IMR-90 (cell line): ENCODE measurements at regions of chr3 and their contacts with region 1.

Region 1: DNA sequence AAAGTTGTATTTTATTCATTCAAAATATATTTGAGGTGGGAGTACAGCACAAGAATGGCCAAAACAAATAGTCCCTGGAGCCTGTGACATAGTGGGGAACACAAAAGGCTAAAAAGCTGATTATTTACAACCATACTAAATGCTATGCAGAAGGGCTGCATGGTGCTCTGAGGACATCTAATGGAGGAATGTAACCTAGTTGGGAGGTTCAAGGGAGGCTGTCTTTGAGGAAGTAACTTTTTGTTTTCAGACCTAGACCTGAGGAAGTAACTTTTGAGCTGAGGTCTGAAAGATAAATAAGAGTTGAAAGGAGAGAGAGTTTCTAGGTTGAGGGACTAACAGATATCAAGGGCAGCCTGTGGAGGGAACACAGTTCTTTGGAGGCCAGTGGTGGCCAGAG is 34.8 kb upstream of the RASA2 start:
- DNase-seq: peak; percentile 80
- ATAC-seq: peak; percentile 68
- H3K4me3 ChIP-seq: no peak overlapping the region
- H3K27ac ChIP-seq: peak overlapping the region; percentile 28; the same call in 1 of the 2 replicates
- H3K4me1 ChIP-seq: peaks cover 24% of the 10 kb centered on the region
- H3K27me3 ChIP-seq: no peaks in the 10 kb centered on the region
- CTCF ChIP-seq: peak; percentile 89
- POLR2A ChIP-seq: peak; percentile 59; the same call in 1 of the 2 replicates
- RAD21 ChIP-seq: peak; percentile 95

Region 2: DNA sequence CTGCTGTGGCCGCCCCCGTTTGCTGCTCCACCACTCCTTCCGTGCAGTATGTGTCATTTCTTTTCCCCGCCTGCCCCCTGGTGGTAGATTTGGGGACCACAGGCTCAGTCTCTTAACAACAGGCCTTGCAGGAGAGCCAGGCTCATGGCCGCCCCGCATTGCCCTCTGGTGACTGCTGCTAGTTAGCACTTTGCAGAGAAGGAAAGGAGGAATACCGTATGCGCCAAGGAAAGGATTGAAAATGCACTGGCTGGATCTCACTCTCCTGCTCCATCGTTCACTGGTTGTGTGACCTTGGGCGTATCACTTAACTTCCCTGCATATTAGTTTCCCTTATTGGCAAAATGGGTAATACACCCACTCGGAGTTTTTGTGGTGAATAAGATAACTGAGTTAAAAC is 259.7 kb before region 1 on chr3:
- CTCF ChIA-PET with region 1: no interaction called
- POLR2A ChIA-PET with region 1: no interaction called
- dilution Hi-C with region 1: no loop called
- in situ Hi-C with region 1: no loop called
- intact Hi-C with region 1: loop called (anchors 1 kb)
- DNase-seq: peak; percentile 91
- ATAC-seq: peak; percentile 100
- H3K4me3 ChIP-seq: no peak overlapping the region
- H3K27ac ChIP-seq: no peak overlapping the region
- H3K4me1 ChIP-seq: no peaks in the 10 kb centered on the region
- H3K27me3 ChIP-seq: peaks cover 20% of the 10 kb centered on the region
- CTCF ChIP-seq: peak; percentile 99
- POLR2A ChIP-seq: no peak
- RAD21 ChIP-seq: peak; percentile 93

Region 3: DNA sequence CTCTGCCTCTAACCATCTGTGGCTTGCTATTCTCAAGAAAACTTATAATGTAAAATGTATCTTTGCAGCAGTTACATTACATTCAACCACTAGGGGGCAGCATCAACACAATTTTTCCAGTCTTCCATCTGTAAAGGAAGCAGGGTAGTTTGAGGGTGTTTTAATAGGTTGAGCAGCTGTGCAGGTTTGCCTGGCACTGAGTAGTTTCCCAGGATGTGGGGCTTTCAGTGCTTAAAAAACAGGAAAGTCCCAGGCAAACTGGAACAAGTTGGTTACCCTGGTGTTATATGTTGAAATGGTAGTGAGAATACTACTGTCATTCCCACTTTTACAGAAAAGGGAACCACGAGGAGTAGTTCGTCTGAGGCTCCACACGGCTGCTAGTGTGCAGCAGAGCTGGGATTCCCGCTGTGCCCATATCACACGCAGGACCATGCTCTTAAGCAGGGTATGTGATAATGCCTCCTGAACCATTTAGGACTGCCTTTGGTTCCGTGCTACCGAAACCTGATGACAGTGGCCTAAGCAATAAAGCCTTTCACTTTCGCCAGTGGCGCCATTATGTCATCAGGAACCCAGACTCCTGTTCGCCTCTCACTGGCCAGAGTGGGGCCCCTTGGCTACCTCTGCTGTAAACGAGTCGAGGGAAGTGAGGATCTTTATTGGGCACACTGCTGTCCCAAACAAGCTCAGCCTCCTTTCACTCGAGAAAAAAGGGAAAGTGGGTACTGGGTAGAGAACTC is 148.4 kb before region 1 on chr3:
- CTCF ChIA-PET with region 1: interaction called, 22 read pairs
- POLR2A ChIA-PET with region 1: interaction called, 3 read pairs
- dilution Hi-C with region 1: no loop called
- in situ Hi-C with region 1: no loop called
- intact Hi-C with region 1: loop called (anchors 2 kb)
- DNase-seq: peak; percentile 86
- ATAC-seq: peak; percentile 62
- H3K4me3 ChIP-seq: no peak overlapping the region
- H3K27ac ChIP-seq: no peak overlapping the region
- H3K4me1 ChIP-seq: peaks cover 6% of the 10 kb centered on the region
- H3K27me3 ChIP-seq: no peaks in the 10 kb centered on the region
- CTCF ChIP-seq: peak; percentile 85
- POLR2A ChIP-seq: no peak
- RAD21 ChIP-seq: peak; percentile 73

Region 4: GRCh38 chr3:141355242-141355641 is 96.8 kb before region 1 on chr3:
- CTCF ChIA-PET with region 1: interaction called, 11 read pairs
- POLR2A ChIA-PET with region 1: no interaction called
- dilution Hi-C with region 1: no loop called
- in situ Hi-C with region 1: loop called (anchors 5 kb)
- intact Hi-C with region 1: no loop called
- DNase-seq: no peak
- ATAC-seq: no peak
- H3K4me3 ChIP-seq: no peak overlapping the region
- H3K27ac ChIP-seq: no peak overlapping the region
- H3K4me1 ChIP-seq: peaks cover 9% of the 10 kb centered on the region
- H3K27me3 ChIP-seq: no peaks in the 10 kb centered on the region
- CTCF ChIP-seq: no peak
- POLR2A ChIP-seq: no peak
- RAD21 ChIP-seq: no peak

Region 5: DNA sequence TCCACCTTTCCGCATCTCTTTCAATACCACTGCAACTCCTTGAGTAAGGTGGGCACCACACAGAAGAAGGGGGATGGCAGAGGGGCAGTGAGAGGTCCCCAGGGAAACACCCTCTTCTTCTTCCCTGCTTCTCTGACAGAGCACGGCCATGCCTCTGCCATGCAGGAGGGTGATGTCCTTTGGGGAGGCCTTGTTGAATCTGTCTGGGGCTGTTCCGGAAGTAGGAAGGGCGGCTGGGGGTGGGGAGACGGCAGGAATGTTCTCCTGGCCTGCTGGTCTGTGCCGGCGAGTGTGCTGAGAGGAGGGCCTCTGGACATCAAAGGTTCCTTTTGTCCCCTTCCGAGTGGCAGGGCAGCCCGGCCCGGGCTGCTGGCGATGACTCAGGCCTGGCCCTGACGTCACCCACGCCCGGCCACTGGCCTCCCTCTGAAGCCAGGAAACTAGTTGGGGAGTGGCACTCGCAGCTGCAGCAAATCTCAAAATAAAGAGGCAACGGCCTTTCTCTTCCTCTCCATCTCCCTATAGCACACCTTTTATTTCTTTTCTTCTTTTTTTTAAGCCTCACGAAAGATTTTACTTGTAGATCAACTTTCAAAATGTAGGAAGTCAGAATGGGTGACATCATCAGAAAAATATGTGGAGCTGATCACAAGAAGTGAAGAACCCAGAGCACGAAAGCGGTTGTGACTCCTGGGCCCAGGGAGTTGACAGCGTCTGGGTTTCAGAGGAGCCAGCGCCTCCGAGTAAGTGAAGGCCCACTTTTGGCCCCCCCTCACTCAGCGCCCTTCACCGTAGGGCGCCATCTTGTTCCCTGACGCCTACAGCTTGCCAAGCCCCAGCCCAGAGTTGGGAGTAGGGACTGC is 83.7 kb before region 1 on chr3 and contains the start of gene ZBTB38:
- CTCF ChIA-PET with region 1: interaction called, 5 read pairs
- POLR2A ChIA-PET with region 1: no interaction called
- dilution Hi-C with region 1: no loop called
- in situ Hi-C with region 1: no loop called
- intact Hi-C with region 1: loop called (anchors 1 kb)
- DNase-seq: peak; percentile 97
- ATAC-seq: peak; percentile 71
- H3K4me3 ChIP-seq: peak within 1 kb of the TSS; percentile 45; the same call in 1 of the 2 replicates
- H3K27ac ChIP-seq: peak within 1 kb of the TSS; percentile 99
- H3K4me1 ChIP-seq: peaks cover 21% of the 10 kb centered on the region
- H3K27me3 ChIP-seq: no peaks in the 10 kb centered on the region
- CTCF ChIP-seq: no peak
- POLR2A ChIP-seq: peak; percentile 43
- RAD21 ChIP-seq: no peak; the same call in 1 of the 2 replicates
- total RNA-seq, gene ZBTB38: 230 and 274 TPM in 2 replicates

Region 6: DNA sequence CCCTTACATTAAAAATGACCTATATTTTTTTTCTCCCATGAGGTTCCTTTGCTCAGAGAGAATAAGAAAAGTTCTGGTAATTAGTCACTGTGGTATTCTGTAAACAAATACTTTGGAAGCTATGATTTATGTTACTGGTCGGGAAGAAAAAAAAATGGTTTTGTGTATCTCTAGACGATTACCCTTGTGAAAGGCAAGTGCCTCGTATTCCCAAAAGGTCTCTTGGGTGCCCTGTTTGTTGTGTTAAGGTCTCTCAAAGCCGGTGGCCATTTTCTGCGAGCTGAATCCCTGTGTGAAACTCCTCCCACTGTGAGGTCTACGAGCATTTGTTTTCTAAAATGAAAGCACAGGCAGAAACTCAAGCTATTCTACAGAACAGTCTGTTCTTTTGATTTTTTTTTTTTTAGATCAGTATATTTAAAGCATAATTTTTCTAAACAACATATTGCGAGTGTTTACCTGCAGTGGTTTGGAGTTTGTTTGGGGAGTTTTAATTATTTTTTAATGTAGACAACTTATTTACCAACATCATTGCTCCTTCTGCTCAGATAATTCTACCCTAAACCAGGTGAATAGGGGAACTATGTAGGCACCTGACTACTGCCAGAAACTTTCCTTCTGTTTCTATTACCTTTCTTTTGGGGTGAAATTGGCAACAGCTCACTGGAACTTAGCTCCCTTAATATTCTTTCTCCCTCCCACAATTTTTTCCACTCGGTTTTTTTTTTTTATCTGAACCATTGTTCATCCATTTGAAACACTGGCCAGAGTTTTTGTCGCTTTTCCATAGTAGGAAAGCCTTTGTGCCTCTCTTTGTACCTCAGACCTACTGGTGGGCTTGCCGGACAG is 39.7 kb before region 1 on chr3:
- CTCF ChIA-PET with region 1: interaction called, 8 read pairs
- POLR2A ChIA-PET with region 1: interaction called, 3 read pairs
- dilution Hi-C with region 1: no loop called
- in situ Hi-C with region 1: no loop called
- intact Hi-C with region 1: loop called (anchors 2 kb)
- DNase-seq: peak; percentile 96
- ATAC-seq: peak; percentile 58
- H3K4me3 ChIP-seq: no peak overlapping the region
- H3K27ac ChIP-seq: peak overlapping the region; percentile 87
- H3K4me1 ChIP-seq: peaks cover 45% of the 10 kb centered on the region
- H3K27me3 ChIP-seq: no peaks in the 10 kb centered on the region
- CTCF ChIP-seq: no peak
- POLR2A ChIP-seq: peak; percentile 55; the same call in 1 of the 2 replicates
- RAD21 ChIP-seq: no peak; the same call in 1 of the 2 replicates

Region 7: DNA sequence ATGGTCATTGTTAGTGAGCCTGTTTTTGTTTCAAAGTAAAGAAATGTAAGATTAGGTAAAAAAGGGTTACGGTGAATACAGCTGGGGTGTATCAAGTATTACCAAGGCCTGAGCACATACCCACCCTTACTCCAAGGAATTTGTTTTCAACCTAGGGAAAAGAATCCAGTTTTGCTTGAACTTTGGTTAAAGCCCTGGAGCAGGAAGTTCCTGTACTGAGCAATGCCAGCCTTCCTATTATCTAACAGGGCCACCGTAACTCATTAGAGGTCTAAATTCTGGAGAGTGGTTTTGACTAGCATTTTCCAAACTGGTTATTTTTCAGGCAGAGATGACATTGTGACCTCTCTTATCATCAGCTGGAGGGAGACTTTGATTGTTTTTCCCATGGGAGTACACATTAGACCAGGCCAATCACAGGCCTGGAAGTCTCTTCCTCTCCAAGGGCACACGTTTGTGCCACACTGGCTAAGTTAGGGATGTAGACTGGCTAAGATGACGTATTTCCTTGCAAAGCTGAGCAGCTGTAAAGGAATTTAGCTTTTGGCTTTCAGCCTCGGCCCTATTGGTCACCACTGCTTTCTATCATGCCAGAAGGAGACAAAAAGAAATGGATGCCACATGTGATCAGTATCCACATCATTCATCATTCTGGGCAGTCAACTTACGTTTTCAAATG is 258.7 kb after region 1 on chr3:
- CTCF ChIA-PET with region 1: no interaction called
- POLR2A ChIA-PET with region 1: no interaction called
- dilution Hi-C with region 1: no loop called
- in situ Hi-C with region 1: no loop called
- intact Hi-C with region 1: no loop called
- DNase-seq: peak; percentile 94
- ATAC-seq: peak; percentile 85
- H3K4me3 ChIP-seq: no peak overlapping the region
- H3K27ac ChIP-seq: peak overlapping the region; percentile 42; the same call in 1 of the 2 replicates
- H3K4me1 ChIP-seq: peaks cover 14% of the 10 kb centered on the region
- H3K27me3 ChIP-seq: no peaks in the 10 kb centered on the region
- CTCF ChIP-seq: no peak
- POLR2A ChIP-seq: no peak
- RAD21 ChIP-seq: no peak